H1 (cell line): ENCODE measurements at regions of chr4 and their contacts with region 1.

Region 1: GRCh38 chr4:11765849-11766453 is 337.3 kb upstream of the HS3ST1 start:
- DNase-seq: peak in 1 of 2 experiments; percentile 17
- H3K4me3 ChIP-seq: no peak overlapping the region
- H3K27ac ChIP-seq: no peak overlapping the region
- H3K4me1 ChIP-seq: no peaks in the 10 kb centered on the region
- H3K27me3 ChIP-seq: no peaks in the 10 kb centered on the region
- CTCF ChIP-seq: peak; percentile 34 to 70 (median 64)
- EP300 ChIP-seq: no peak
- POLR2A ChIP-seq: no peak
- RAD21 ChIP-seq: peak; percentile 66 to 74

Region 2: GRCh38 chr4:11777447-11777846 is 11.5 kb after region 1 on chr4:
- CTCF ChIA-PET with region 1: interaction called, 30 read pairs
- POLR2A ChIA-PET with region 1: no interaction called
- DNase-seq: no peak
- H3K4me3 ChIP-seq: no peak overlapping the region
- H3K27ac ChIP-seq: no peak overlapping the region
- H3K4me1 ChIP-seq: no peaks in the 10 kb centered on the region
- H3K27me3 ChIP-seq: no peaks in the 10 kb centered on the region
- CTCF ChIP-seq: no peak
- EP300 ChIP-seq: no peak
- POLR2A ChIP-seq: no peak
- RAD21 ChIP-seq: no peak

Region 3: DNA sequence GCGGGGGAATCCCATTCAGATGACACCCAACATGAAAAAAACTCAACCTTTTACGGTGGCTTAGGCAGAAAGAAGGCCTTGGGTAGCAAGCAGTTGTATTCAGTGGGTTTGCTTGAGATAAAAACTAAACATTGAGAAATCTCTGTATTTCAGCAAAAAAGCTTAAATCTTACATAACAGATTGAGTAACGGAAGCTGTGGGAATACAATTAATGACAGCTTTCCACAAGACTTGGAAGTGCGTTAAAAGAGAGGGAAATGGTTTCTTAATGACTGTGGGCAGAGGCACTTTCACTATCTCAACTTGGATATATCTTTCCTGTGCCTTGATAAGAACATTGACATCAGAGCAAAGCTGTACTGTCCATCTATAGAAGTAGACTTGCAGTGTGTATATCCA is 81.2 kb after region 1 on chr4:
- CTCF ChIA-PET with region 1: no interaction called
- POLR2A ChIA-PET with region 1: no interaction called
- DNase-seq: no peak
- H3K4me3 ChIP-seq: no peak overlapping the region
- H3K27ac ChIP-seq: no peak overlapping the region
- H3K4me1 ChIP-seq: peaks cover 0 to 7% (median under 1%) of the 10 kb centered on the region in 4 experiments; a peak in 2 of 7 replicates
- H3K27me3 ChIP-seq: no peaks in the 10 kb centered on the region
- CTCF ChIP-seq: no peak
- EP300 ChIP-seq: no peak
- POLR2A ChIP-seq: no peak
- RAD21 ChIP-seq: no peak

Region 4: DNA sequence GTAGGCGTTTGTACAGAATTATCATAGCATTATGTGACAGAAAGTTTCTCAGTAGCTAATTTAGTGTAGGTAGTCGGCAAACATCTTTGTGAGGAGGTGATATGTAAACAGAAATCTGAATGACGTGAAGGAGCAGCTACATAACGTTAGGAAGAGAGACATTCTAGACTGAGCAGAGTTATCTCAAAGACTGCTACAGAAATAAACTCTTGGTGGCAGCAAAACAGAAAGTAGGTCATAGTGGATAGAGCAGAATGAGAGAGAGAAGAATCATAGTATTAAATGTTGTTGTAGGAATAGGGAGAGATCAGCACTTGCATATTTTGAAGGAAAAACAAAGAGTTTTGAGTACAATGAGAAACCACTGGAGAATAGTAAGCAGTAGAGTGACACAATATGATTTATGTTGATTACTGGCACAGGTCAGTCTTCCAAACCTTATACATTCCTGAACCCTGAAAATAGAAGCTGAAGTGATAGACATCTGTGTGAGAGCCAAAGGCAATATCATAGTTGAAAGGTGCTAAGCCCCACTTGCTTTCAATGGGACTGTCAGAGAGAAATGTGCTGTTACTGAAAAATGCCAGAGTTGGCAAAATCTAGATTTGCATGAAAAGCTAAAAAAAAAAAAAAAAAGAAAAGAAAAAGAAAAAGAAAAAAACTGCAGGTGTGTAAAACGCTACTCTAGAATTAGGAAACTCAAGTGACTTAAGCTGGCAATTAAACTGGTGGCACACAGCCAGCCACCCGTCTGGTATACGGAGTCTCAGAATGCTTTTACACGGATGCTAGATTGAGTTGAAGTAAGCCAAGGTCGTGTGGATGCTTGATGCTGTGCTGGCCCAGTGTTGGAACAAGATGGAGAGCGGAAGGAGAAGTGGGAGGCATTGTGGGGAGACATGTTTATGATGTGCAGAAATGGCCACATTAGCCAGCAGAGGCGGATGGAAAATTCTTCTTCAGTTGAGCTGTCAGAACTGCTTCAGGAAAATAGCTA is 413.0 kb after region 1 on chr4:
- CTCF ChIA-PET with region 1: no interaction called
- POLR2A ChIA-PET with region 1: no interaction called
- DNase-seq: no peak
- H3K4me3 ChIP-seq: no peak overlapping the region
- H3K27ac ChIP-seq: no peak overlapping the region
- H3K4me1 ChIP-seq: no peaks in the 10 kb centered on the region
- H3K27me3 ChIP-seq: no peaks in the 10 kb centered on the region
- CTCF ChIP-seq: no peak
- EP300 ChIP-seq: no peak
- POLR2A ChIP-seq: no peak
- RAD21 ChIP-seq: no peak